ENCODE measurements at regions of chr1 and their contacts with region 1.

Region 1: GRCh38 chr1:201828820-201829774 is at the start of gene IPO9:
- DNase-seq: peak; percentile 83 to 98 (median 92)

Region 2: DNA sequence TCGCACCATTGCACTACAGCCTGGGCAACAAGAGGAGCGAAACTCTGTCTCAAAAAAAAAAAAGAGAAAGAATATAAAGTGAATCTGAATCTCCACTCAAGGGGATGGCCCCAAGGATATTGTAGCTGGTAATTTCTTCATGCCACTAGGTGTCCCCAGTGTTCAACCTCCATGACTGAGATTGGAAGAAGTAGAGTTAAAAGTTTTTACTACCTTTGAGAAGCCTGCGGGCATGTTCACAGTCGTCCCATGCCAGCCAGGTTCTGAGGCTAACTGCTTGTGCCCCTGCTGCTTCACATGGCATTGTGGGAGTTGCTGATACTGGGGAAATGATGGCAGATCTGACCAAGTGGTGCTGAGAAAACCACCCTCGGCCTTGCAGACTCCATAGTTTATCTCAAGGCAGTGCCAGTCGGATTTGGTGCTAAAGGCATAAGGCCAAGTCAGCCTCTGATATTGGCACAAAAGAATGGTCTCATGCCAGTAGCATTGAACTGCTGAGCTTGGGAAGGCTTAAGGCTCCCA is 48.8 kb after region 1 on chr1:
- intact Hi-C with region 1: loop called (anchors 5 kb)
- DNase-seq: peak in 3 of 10 donors; percentile 41 to 76 (median 43)

Region 3: DNA sequence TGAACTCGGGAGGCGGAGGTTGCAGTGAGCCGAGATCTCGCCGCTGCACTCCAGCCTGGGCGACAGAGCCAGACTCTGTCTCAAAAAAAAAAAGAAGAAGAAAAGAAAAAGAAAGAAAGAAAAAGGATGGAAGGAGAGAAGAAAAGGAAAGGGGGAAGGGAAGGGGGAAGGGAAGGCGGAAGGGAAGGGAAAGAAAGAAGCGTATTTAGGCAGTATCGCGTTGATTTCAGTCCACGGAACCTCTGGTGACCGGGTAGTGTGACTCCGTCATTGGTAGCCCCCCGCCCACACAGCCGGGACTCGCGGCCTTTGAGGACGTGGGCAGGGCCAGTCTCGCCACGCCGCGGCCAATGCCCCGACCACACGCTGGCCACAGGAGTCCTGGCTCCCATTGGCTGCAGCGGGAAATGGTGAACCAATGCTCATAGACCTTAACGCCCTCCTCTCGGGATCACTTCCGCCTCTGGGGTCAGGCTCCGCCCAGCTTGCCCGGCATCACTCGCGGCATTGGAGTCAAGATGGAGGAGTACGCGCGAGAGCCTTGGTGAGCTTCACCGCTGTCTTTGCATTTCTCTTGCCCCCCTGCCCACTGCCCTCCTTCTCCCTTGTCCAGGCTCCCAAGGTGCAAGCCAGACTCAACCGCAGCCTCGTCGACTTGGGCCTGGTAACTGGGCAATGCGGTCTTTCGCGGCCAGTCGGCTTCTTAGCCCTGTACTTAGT is 126.1 kb after region 1 on chr1 and contains the start of gene TIMM17A:
- intact Hi-C with region 1: no loop called
- DNase-seq: peak; percentile 95 to 99 (median 98)